ENCODE measurements at regions of chr4 and their contacts with region 1.

Region 1: DNA sequence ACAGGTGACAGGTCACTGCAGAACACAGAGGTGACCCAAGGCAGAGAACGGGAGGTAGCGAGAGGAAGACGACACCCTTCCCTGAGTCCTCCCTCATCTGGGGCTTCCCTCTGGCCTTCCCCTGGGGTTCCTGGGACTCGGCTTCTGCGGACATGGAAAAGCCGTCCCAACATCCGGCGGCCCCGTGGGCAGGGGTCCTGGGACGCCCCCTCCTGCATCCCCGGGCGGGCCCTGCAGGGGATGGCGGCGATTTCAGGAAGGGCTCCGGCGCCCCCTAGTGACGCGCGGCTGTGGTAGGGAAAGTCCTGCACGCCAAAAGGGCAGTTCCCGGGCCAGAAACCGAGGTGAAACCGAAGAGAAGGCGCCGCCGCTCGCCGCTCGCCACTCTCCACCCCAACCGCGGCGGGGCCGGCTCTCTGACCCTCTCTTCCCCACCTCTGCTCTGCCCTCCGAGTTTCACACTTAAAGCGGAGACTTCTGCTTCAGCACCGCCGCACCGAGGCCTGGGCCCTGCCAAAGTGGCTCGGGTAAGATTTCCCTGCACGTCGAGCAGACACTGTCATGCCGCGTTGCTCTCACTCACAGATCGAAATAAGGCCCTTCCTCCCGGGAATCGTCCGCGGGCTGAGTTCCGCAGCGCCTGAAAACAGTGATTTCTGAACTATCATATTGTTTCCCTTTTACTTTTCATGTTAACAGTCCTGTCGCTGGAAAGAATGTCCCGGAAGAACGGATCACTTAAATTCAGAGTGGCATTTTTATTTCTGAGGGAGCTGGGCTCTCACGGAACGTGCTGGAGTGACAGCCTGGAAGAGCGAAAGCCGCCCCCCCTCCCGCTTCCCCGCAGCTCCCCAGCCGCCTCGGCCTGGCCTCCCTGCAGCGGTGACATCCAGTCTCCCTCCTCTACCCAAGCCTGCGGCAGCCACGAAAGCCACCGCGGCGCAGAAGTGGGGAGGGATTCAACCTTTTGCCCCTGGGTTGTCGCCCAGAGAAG is 110.6 kb downstream of the DCTD start:
- DNase-seq: peak; percentile 24 to 44
- ATAC-seq: peak; percentile 63 to 75
- H3K4me3 ChIP-seq: peak overlapping the region; percentile 48 to 69 (median 54)
- H3K27ac ChIP-seq: no peak overlapping the region
- H3K4me1 ChIP-seq: no peaks in the 10 kb centered on the region
- H3K27me3 ChIP-seq: no peaks in the 10 kb centered on the region
- CTCF ChIP-seq: peak; percentile 55 to 89 (median 68)
- POLR2A ChIP-seq: no peak

Region 2: DNA sequence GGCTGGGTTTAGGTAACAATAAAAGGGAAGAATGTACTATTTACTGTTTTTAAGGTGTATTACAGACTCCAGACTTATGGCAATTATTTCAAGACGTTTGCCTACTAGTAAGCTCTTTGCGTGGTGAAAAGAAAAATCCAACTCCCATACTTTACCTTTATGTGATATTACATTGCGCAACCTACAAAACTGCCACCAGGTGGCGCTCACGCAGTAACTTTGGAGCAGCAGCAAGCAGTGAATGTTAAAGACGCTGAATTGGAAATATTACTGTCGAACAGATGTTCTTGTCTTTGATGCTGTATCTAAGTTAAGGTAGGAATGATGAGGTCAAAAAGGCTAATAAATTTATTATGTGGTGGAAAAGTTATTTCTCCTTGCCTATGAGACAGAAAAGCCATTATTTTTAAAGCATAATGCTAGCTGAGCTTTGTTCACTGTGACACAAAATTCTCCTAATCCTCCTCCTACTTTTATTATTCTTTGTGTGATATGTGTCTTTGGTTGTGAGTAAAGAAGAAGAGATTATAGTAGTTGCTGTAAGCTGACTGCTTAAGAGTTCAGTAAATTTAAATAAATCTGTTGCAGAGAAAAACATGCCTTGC is 1663.2 kb before region 1 on chr4:
- in situ Hi-C with region 1: no loop called
- intact Hi-C with region 1: loop called (anchors 5 kb)
- DNase-seq: peak; percentile 19 to 54
- ATAC-seq: peak in 1 of 2 donors; percentile 62
- H3K4me3 ChIP-seq: no peak overlapping the region
- H3K27ac ChIP-seq: no peak overlapping the region
- H3K4me1 ChIP-seq: no peaks in the 10 kb centered on the region
- H3K27me3 ChIP-seq: no peaks in the 10 kb centered on the region
- CTCF ChIP-seq: peak; percentile 66 to 86 (median 72)
- POLR2A ChIP-seq: no peak

Region 3: GRCh38 chr4:182478475-182478874 is 328.1 kb before region 1 on chr4:
- in situ Hi-C with region 1: no loop called
- intact Hi-C with region 1: loop called (anchors 2 kb)
- DNase-seq: no peak
- ATAC-seq: no peak
- H3K4me3 ChIP-seq: no peak overlapping the region
- H3K27ac ChIP-seq: no peak overlapping the region
- H3K4me1 ChIP-seq: peaks cover 10 to 14% of the 10 kb centered on the region in 2 donors
- H3K27me3 ChIP-seq: no peaks in the 10 kb centered on the region
- CTCF ChIP-seq: peak in 4 of 5 experiments; percentile 21 to 69 (median 41)
- POLR2A ChIP-seq: no peak

Region 4: GRCh38 chr4:182880387-182881356 is 74.1 kb after region 1 on chr4:
- in situ Hi-C with region 1: no loop called
- intact Hi-C with region 1: no loop called
- DNase-seq: peak in 1 of 2 donors; percentile 18
- ATAC-seq: peak in 1 of 2 donors; percentile 33
- H3K4me3 ChIP-seq: peak overlapping the region in 2 of 4 donors; percentile 19 to 28
- H3K27ac ChIP-seq: no peak overlapping the region
- H3K4me1 ChIP-seq: peaks cover 0 to 5% of the 10 kb centered on the region in 2 donors
- H3K27me3 ChIP-seq: no peaks in the 10 kb centered on the region
- CTCF ChIP-seq: no peak
- POLR2A ChIP-seq: no peak

Measured in gastrocnemius medialis (tissue), 4 donors.